KBM-7 (cell line): ENCODE measurements at regions of chr19 and their contacts with region 1.

Region 1: GRCh38 chr19:15629003-15629880 is 11.5 kb upstream of the CYP4F3 start:
- DNase-seq: peak; percentile 86

Region 2: DNA sequence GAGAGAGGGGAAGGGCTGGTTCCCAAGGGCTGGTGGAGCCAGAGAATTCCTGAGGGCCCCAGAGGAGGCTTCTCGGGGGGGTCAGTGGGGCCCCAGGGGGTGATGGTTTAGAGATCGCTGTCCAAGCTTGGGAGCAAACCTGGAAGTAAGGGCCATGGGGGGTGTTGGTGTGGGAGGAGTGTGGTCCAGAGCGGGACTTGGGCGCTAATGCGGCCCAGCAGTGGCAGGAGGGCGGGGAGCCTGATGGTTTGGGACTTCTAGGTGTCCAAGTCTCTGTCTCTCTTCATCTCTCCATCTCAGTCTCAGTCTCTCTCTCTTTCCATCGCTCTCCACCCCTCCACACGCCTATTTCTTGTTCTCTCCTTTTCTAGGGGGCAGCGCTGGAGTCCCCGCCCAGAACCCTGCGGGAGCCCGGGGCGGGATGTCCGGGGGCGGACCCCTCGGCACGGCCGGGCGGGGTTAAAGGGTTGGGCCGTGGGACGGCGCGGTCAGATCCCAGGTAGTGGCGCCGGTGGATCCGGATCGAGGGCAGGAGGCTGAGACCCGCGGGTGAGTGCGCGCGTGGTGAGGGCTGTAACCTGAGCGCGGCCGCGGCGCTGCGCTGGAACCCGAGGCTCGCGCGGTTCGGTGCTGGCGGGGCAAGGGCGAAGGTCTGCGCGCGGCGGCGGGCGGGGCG is 121.1 kb before region 1 on chr19 and contains the start of gene CYP4F22:
- in situ Hi-C with region 1: no loop called
- DNase-seq: no peak

Region 3: GRCh38 chr19:15717809-15718208 is 88.6 kb after region 1 on chr19:
- in situ Hi-C with region 1: no loop called
- DNase-seq: no peak

Region 4: DNA sequence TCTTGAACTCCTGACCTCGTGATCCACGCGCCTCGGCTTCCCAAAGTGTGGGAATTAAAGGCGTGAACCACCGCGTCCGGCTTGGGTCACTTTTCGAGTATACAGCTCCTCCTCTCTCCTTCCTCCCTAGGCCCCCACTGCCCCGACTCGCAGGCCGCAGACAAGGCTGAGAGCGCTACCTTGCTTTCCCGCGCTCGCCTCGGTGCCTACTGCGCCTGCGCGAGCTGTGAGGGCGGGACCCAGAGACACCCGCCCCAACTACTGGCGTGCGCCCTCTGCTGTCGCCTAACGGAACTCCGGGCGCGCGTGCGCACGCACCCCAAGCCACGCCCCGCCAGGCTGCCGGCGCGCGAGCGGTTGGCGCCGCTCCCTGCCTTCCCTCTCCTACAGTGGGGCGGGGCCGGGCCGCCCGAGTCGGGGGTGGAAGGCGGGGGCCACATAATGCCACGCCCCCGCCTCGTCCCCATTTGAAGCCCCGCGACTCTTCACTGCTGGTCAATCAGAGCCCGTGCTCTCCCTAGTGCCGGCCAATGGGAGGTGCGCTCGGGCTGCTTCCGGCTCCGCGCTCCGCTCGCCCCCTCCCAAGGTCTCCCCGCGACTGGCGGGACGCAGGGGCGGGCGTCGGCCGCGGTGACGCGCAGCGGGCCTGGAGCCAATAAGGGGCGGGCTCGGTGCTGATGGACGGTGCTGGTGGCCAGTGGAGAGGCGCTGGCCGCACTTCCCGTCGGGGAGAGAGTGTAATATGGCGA is 482.1 kb after region 1 on chr19 and contains the start of gene RAB8A:
- in situ Hi-C with region 1: no loop called
- DNase-seq: peak; percentile 100

Region 5: GRCh38 chr19:16185123-16185767 is 556.0 kb after region 1 on chr19 and contains the start of gene FAM32A:
- in situ Hi-C with region 1: loop called (anchors 25 kb)
- DNase-seq: peak; percentile 99